Calu3 (cell line): ENCODE measurements at regions of chr13 and their contacts with region 1.

Region 1: DNA sequence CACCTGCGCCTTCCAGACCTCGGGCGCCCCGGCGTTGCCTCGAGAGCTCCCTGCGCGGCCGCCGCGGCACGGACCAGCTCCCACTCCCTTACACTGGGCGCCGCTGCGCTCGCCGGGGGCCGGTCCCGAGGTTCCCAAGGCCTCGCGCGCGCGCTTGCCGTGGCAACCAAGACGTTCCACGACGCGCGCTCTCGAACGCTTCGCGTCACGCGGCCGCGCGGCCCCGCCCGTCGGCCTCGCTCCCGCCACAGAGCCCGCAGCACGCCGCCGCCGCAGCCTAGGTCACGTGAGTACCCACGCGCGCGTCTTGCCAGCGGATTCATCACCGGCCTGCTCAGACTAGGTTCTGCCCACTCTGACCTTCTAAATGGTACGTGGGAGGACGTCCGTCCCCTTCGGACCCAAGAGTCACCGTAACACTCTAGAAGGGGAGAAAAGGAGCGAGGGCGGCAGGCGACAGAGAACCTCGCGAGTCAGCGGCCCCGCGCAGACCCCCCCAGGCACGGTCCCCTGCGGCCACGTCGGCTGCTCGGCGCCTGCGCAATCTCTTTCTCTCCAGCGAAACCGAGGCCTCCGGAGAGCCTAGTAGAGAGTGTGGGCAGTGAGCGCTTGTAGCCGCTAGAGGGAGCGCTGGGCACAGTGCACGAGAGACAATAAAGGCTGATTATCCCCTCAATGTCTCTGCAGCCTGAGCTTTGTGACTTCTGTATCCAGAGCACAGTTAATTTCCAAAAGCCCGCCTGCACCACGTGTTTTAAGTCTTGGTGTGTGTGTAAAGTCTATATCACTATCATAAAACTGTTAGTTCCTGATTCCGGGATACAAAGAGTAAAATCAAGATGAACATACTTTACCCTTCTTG is at the start of gene SPART:
- DNase-seq: peak; percentile 49
- H3K4me3 Mint-ChIP-seq: no peak within 1 kb of the TSS
- H3K27ac Mint-ChIP-seq: no peak within 1 kb of the TSS
- H3K4me1 Mint-ChIP-seq: no peaks in the 10 kb centered on the region
- H3K27me3 Mint-ChIP-seq: no peaks in the 10 kb centered on the region
- CTCF ChIP-seq: peak; percentile 86
- total RNA-seq, gene SPART: not detected in 2 replicates

Region 2: GRCh38 chr13:36057029-36057428 is 289.4 kb before region 1 on chr13:
- CTCF ChIA-PET with region 1: no interaction called
- intact Hi-C with region 1: no loop called
- DNase-seq: no peak
- H3K4me3 Mint-ChIP-seq: no peak overlapping the region
- H3K27ac Mint-ChIP-seq: no peak overlapping the region
- H3K4me1 Mint-ChIP-seq: no peaks in the 10 kb centered on the region
- H3K27me3 Mint-ChIP-seq: peaks cover 69% of the 10 kb centered on the region
- CTCF ChIP-seq: no peak

Region 3: DNA sequence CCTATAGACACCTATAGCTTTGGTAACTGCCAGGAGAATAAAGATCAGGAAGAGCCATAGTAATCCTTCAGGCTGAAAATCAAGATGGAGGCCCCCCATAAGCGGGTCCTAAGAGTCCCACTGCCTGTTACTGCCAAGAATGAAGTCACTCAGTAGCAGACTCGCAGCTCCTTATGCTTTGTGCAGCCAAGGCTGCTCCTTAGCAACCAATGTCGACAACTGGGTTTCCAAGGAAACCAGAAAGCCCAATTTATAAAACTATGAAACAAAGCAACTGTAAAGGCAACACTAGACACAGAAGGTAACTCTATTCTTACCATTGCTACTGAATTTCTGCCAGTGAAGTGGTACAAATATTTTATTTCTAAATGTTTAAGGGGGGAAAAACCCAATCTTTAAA is 271.8 kb before region 1 on chr13:
- CTCF ChIA-PET with region 1: interaction called, 14 read pairs
- intact Hi-C with region 1: no loop called
- DNase-seq: no peak
- H3K4me3 Mint-ChIP-seq: no peak overlapping the region
- H3K27ac Mint-ChIP-seq: no peak overlapping the region
- H3K4me1 Mint-ChIP-seq: no peaks in the 10 kb centered on the region
- H3K27me3 Mint-ChIP-seq: peaks cover 62% of the 10 kb centered on the region
- CTCF ChIP-seq: no peak

Region 4: DNA sequence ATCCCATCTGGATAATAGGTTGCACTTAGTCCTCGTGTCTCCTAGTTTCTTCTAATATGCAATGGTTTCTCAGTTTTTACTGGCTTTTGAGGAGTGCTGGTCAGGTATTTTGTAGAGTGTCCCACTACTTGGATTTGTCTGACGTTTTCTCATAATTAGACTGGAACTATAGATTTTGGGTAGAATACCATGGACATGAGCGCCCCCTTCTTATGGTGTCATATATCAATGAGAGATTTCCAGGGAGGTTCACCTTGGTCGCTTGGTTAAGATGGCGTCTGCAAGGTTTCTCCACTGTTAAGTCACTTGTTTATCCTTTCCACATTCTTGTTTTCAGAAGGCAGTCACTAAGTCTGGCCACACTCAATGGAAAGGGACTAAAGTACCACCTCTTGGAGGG is 138.8 kb before region 1 on chr13:
- CTCF ChIA-PET with region 1: no interaction called
- intact Hi-C with region 1: no loop called
- DNase-seq: no peak
- H3K4me3 Mint-ChIP-seq: no peak overlapping the region
- H3K27ac Mint-ChIP-seq: no peak overlapping the region
- H3K4me1 Mint-ChIP-seq: no peaks in the 10 kb centered on the region
- H3K27me3 Mint-ChIP-seq: peaks cover 52% of the 10 kb centered on the region
- CTCF ChIP-seq: no peak

Region 5: DNA sequence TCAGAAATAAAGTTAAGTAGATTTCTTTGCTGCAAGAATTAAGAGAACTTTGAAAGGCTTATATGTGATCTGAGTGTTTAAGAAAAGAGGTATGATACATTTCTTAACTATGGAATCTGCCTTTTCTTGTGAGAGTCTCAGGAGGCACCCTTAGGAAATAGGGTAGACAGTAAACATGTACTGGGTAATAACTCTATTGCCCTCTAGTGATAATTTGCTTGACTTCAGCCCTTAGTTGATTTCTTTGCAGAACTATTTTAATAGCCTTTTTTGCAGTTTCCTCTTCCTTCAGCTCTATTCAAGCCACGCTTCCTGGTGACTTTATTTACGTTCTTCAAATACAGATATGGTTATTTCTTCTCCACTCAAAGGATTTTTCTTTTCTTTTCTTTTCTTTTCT is 48.8 kb after region 1 on chr13:
- CTCF ChIA-PET with region 1: interaction called, 10 read pairs
- intact Hi-C with region 1: loop called (anchors 1 kb)
- DNase-seq: no peak
- H3K4me3 Mint-ChIP-seq: no peak overlapping the region
- H3K27ac Mint-ChIP-seq: no peak overlapping the region
- H3K4me1 Mint-ChIP-seq: no peaks in the 10 kb centered on the region
- H3K27me3 Mint-ChIP-seq: no peaks in the 10 kb centered on the region
- CTCF ChIP-seq: no peak